IMR-90 (cell line): ENCODE measurements at regions of chr15 and their contacts with region 1.

Region 1: DNA sequence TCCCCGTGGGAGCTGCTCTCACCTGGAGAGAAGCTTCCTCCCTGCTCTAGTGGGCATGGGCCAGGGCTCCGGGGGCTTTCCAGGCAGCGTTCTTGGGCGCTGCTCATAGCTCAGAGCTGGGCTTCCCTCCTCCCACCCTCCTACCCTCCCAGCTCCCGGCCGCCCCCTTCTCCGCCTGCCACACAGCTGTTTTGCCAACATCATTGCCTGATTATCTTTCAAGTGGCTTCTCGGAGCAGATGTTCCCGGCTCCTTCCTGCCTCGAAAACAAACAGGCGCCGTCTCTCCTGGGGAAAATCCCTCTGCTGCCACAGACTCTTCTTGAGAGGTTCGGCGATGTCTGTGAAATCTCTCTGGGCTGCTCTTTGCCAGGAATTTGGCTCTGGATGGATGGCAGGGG is 195.6 kb downstream of the RPLP1 start:
- DNase-seq: no peak
- ATAC-seq: no peak
- H3K4me3 ChIP-seq: no peak overlapping the region
- H3K27ac ChIP-seq: no peak overlapping the region
- H3K4me1 ChIP-seq: no peaks in the 10 kb centered on the region
- H3K27me3 ChIP-seq: peaks cover 63% of the 10 kb centered on the region
- CTCF ChIP-seq: no peak
- POLR2A ChIP-seq: no peak
- RAD21 ChIP-seq: no peak

Region 2: DNA sequence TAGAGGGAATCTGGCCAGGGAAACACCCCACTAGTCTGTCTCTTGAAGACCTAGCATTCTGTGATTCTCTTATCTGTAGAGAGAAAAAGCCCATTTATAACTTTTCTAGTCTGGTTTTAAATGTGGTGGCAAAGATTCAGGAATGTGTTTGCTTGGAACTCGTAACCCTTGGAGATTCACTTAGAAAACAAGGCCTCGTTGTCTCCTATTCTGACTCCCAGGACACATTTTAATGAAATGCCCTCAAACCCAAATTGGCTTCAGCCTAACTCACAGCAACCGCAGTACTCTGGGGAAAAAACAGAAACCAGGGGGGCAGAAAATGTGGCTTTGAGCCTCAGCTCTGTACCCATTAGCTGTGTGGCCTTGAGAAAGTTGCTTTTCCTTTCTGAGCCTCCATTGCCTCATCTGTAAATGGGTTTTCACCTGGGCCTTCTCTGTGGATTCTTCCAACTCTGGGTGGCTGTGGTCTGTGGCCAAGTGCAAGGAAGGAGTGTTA is 159.1 kb before region 1 on chr15:
- CTCF ChIA-PET with region 1: no interaction called
- POLR2A ChIA-PET with region 1: no interaction called
- dilution Hi-C with region 1: no loop called
- in situ Hi-C with region 1: no loop called
- intact Hi-C with region 1: loop called (anchors 10 kb)
- DNase-seq: no peak
- ATAC-seq: no peak
- H3K4me3 ChIP-seq: no peak overlapping the region
- H3K27ac ChIP-seq: no peak overlapping the region
- H3K4me1 ChIP-seq: no peaks in the 10 kb centered on the region
- H3K27me3 ChIP-seq: peaks cover 55% of the 10 kb centered on the region
- CTCF ChIP-seq: no peak
- POLR2A ChIP-seq: no peak
- RAD21 ChIP-seq: no peak